ENCODE measurements at regions of chr6 and their contacts with region 1.

Region 1: DNA sequence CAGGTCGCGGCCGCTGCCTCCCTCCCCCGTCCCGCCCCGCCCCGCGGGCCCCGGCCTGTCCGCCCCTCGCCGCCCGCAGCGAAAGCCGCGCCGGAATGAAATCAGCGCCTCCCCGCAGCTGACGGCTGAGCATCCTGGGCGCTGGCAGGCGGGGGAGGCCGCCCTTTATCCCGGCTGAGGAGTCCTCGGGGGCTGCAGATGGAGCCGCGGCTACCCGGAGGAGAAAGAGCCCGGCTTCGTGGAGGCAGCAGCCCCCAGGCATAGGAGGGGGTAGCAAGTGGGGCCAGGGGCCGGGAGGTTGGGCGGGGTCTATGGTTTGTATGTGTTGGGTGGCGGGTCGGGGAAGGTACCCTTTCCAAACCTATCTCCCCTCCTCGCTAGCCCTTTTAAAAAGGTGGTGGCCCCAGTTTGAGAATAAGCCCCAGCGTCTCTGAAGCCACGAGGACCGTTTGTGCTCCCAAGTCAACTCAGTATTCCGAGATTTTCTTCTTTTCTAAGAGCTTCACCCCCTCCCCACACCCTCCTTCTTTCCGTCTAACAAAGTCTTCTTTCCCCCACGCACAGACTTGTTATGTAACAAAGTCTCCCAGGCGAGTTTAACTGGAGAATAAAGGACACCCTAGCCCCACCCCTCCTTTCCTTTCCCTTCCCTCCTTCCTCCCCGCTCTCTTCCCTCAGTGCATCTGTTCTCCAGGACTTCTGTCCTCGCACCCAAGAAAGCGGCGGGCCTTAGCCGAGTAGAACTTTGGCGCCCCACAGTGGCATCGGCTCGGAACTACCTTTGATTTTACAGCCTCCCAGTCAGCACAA is 11.0 kb downstream of the POU3F2 start:
- DNase-seq: peak; percentile 77 to 89
- ATAC-seq: peak; percentile 80
- H3K4me3 ChIP-seq: peak overlapping the region; percentile 37 to 44
- H3K27ac ChIP-seq: no peak overlapping the region
- H3K4me1 ChIP-seq: no peaks in the 10 kb centered on the region
- H3K27me3 ChIP-seq: peaks cover 0 to under 1% of the 10 kb centered on the region in 2 donors

Region 2: GRCh38 chr6:97497713-97498331 is 1347.6 kb before region 1 on chr6:
- intact Hi-C with region 1: loop called (anchors 10 kb)
- DNase-seq: peak; percentile 58 to 79
- ATAC-seq: peak; percentile 75
- H3K4me3 ChIP-seq: no peak overlapping the region
- H3K27ac ChIP-seq: no peak overlapping the region
- H3K4me1 ChIP-seq: no peaks in the 10 kb centered on the region
- H3K27me3 ChIP-seq: no peaks in the 10 kb centered on the region

Region 3: DNA sequence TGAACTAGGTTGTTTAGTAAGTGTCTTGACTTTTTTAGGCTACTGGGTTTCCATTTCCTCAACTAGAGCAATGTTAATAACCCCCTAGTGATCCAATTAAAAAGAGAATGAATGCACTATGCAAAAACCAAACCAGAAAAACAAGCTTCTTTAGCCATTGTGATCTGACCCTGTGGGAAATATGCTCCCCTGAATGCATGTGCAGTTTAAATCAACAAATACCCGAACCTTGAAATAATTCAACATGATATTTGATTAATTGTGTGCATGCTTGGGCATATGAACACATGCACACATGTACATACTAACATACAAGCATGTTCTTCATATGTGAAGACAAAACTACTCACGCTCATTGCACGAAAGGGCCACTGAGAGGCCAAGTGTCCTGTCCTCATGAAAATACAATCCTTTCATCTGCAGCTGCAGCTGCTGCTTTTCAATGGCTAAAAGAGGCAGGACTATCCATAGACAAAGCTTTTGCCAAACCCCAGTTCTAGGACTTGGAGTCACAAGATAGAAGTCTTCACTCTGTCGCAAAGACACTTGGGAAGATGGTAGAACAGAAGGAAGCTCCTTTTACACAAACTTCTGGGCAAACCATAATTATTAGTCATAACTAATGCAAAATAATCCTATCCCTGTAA is 218.2 kb before region 1 on chr6:
- intact Hi-C with region 1: no loop called
- DNase-seq: no peak
- ATAC-seq: no peak
- H3K4me3 ChIP-seq: no peak overlapping the region
- H3K27ac ChIP-seq: no peak overlapping the region
- H3K4me1 ChIP-seq: no peaks in the 10 kb centered on the region
- H3K27me3 ChIP-seq: no peaks in the 10 kb centered on the region

Region 4: DNA sequence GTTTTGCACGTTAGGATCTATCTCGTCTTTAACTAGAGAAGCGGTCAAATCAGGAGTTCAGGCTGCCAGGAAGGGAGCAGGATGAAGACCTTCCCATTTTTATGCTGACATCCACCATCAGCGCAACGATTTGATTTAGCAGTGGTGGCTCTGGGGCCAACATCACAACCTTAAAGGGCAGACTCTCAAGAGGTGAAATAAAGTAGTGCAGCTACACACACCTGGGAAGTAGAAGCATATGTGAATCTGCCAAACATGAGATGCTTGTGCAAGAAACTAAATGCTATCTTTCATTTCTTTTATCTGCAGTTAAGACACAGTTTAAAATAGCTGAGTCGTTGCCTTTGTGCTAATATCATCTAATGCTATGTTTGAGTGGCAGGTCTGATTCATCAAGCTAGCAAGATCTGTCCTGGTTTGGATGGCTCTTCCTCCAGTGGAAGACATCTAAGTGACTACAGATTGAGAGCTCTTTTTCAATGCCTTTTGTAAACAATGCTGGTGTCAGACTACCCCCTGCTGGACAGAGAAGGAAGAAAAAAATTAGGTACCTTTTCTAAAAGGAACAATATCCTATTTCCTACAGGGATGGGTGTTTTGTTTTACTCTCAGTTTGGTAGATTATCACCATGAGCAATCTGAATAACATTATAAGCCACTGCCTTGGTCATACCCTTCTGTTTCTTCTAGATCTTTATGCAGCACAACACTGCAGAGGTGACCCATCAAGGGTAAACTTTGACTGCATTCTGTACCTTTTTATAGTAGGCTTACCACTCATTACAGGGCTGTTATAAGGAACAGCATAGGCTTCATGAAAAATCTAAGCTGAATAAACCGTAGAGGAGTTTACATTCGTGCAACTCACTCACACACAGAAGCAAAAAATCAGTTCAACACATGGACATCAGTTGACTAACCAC is 274.0 kb after region 1 on chr6:
- intact Hi-C with region 1: loop called in 1 of 2 experiments (anchors 10 kb)
- DNase-seq: no peak
- ATAC-seq: no peak
- H3K4me3 ChIP-seq: no peak overlapping the region
- H3K27ac ChIP-seq: no peak overlapping the region
- H3K4me1 ChIP-seq: no peaks in the 10 kb centered on the region
- H3K27me3 ChIP-seq: no peaks in the 10 kb centered on the region

Measured in aorta (tissue), 5 donors.